Panc1 (cell line): ENCODE measurements at regions of chr5 and their contacts with region 1.

Region 1: GRCh38 chr5:38576442-38576841 is 20.0 kb upstream of the LIFR start:
- DNase-seq: no peak
- ATAC-seq: no peak
- H3K4me3 ChIP-seq: no peak overlapping the region
- H3K27ac ChIP-seq: no peak overlapping the region; the same call in 1 of the 2 replicates
- H3K4me1 ChIP-seq: no peaks in the 10 kb centered on the region
- H3K27me3 ChIP-seq: no peaks in the 10 kb centered on the region
- CTCF ChIP-seq: no peak

Region 2: GRCh38 chr5:38753776-38754175 is 177.3 kb after region 1 on chr5:
- CTCF ChIA-PET with region 1: no interaction called
- POLR2A ChIA-PET with region 1: interaction called, 14 read pairs
- in situ Hi-C with region 1: no loop called
- intact Hi-C with region 1: no loop called
- DNase-seq: no peak
- ATAC-seq: no peak
- H3K4me3 ChIP-seq: no peak overlapping the region
- H3K27ac ChIP-seq: peak overlapping the region; percentile 61; the same call in 1 of the 2 replicates
- H3K4me1 ChIP-seq: no peaks in the 10 kb centered on the region; the same call in 1 of the 2 replicates
- H3K27me3 ChIP-seq: no peaks in the 10 kb centered on the region
- CTCF ChIP-seq: no peak